Mammary epithelial cell (primary cell): ENCODE measurements at regions of chr1 and their contacts with region 1.

Region 1: DNA sequence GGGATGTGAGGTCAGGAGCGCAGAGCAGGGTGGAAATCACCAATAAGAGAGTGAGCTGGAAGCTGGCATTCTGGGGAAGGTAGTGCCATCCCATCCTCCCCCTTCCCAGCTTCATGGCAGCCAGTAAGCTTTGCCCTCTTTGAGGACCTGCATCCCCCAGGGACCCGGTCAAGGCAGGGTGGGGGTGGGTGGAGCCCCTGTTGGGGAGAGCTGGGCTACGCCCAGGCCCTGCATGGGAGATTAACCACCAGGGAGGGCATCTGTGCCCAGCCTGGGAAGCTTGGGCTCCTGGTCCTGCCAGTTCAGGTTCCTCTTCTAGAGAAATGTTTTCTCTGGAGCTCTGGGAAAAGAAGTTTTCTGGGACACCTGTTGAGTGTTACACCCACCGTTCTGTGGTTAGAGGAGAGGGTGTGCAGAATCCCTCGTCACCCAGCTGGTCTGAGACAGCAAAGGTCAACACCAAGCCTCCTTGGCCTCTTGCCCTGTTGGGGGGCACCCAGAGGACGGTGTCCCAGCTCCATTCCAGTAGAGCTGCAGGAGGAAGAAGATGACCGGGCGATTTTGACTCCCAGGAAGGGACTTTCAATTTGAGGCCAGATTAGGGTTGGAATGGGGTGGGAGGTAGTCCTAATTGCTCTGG is 30.1 kb upstream of the TENT5C start:
- DNase-seq: no peak
- H3K4me3 ChIP-seq: no peak overlapping the region
- H3K27ac ChIP-seq: no peak overlapping the region
- H3K4me1 ChIP-seq: no peaks in the 10 kb centered on the region
- H3K27me3 ChIP-seq: no peaks in the 10 kb centered on the region
- CTCF ChIP-seq: no peak

Region 2: DNA sequence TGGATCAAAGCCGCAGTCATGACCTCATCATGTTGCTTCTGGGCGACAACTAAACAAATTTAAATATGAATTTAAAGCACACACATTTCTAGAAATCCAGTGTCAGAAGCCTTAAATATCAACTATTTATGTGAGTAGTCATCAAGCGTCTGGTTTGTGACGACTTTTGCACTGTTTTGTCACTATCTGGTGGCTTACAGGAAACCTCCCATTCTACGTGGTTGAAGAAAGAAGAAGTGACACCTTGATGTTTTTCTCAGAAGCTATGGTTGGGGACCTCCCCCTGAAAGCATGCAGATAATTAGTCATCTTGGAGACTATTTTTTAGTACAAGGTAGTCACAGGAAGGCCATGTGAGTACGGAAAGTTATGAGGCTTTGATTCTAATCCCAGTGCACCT is 88.6 kb after region 1 on chr1:
- CTCF ChIA-PET with region 1: no interaction called
- dilution Hi-C with region 1: loop called (anchors 5 kb)
- in situ Hi-C with region 1: no loop called
- intact Hi-C with region 1: no loop called
- DNase-seq: no peak
- H3K4me3 ChIP-seq: no peak overlapping the region
- H3K27ac ChIP-seq: no peak overlapping the region
- H3K4me1 ChIP-seq: no peaks in the 10 kb centered on the region
- H3K27me3 ChIP-seq: no peaks in the 10 kb centered on the region
- CTCF ChIP-seq: no peak